Activated CD4-positive, alpha-beta memory T cell treated with anti-CD3 and anti-CD28 coated beads, Interleukin-2, amount 10 ng/mL, durations not matched to agents 7 days and 5 days (primary cell): ENCODE measurements at regions of chr1 and their contacts with region 1.

Region 1: GRCh38 chr1:29181413-29182225 is at the start of gene SRSF4:
- DNase-seq: peak; percentile 99
- H3K4me3 Mint-ChIP-seq: peak within 1 kb of the TSS; percentile 98
- H3K27ac Mint-ChIP-seq: peak within 1 kb of the TSS; percentile 95
- H3K4me1 Mint-ChIP-seq: peaks cover 50% of the 10 kb centered on the region
- H3K27me3 Mint-ChIP-seq: no peaks in the 10 kb centered on the region
- total RNA-seq, gene SRSF4: 121 to 123 TPM

Region 2: DNA sequence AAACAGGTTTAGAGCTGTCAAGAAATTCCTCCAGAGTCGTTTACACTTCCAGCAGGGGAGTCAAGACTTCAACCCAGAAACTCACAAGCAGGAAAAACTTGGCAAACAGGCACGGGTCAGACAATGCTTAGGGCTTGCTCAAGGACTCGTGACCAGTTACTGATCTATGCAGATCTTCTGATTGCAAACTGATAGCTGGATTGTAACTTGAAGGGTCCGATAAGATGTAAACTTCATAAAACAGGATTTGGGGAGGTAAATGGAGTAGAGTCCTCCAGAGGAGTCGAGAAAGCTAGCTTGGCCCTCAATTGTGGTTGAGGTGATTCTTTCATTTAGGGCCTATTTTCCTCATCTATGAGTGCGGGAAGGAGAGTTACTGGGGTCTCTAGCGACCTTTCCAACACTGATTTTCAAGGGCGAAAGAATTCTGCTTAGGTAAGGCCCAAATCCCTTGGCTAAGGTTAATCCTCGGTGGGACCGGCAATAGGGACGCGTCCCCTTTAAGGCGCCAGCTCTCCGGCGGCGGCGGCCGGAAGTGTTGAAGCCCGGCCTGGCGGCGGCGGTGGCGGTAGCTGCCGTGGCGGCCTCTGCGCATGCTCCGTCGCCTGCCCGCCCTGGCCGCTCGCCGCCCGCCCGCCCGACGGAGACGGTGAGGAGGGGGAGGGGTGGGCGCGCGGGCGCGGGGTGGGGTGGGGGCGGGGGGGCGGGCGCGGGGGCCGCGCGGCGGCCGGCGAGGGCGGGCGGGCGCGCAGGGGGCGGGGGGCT is 513.2 kb before region 1 on chr1 and contains the start of gene GMEB1:
- CTCF ChIA-PET with region 1: interaction called, 3 read pairs
- POLR2A ChIA-PET with region 1: interaction called, 36 read pairs
- DNase-seq: peak; percentile 89
- H3K4me3 Mint-ChIP-seq: peak within 1 kb of the TSS; percentile 92
- H3K27ac Mint-ChIP-seq: peak within 1 kb of the TSS; percentile 97
- H3K4me1 Mint-ChIP-seq: peaks cover 20% of the 10 kb centered on the region
- H3K27me3 Mint-ChIP-seq: no peaks in the 10 kb centered on the region
- total RNA-seq, gene GMEB1: 27.7 to 28.7 TPM

Region 3: DNA sequence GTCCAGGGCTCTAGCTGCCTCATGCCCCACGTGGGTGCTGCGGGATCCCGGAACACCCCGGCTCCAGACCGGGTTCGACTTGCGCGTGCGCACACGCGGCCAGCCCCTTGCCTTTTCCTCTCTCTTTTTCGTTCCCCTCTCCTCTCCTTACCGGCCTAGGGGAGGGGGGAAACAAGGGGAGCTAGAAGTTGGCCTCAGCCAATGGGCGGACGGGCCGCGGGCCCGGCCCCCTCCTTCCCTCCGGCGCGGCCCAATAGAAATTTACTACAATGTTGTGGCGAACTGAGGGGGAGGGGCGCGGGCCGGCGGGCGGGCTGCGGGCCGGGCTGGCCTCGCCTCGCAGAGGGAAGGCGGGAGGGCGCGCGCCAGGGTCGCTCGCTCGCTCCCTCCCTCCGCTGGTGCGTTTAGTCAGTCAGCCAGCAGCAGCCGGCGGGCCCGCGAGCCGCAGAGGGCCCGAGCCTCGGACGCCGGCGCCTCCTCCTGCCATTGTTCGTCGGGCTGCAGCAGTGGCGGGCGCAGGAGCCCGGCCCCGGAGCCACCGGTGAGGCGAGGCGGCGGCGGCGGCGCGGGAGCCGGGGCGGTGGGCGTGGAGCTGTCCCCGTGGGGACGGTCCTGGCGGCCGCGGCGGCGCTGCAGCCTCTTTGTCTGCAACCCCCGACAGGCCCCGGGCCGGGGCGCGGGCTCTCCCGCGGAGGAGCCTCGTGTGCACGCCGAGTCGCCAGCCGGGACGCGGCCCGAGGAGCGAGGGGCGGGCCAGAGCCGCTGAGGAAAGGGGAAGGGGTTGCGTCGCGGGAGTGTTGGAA is 267.2 kb before region 1 on chr1 and contains the start of gene EPB41:
- CTCF ChIA-PET with region 1: interaction called, 7 read pairs
- POLR2A ChIA-PET with region 1: interaction called, 21 read pairs
- DNase-seq: peak; percentile 90
- H3K4me3 Mint-ChIP-seq: peak within 1 kb of the TSS; percentile 89
- H3K27ac Mint-ChIP-seq: peak within 1 kb of the TSS; percentile 88
- H3K4me1 Mint-ChIP-seq: peaks cover 41% of the 10 kb centered on the region
- H3K27me3 Mint-ChIP-seq: no peaks in the 10 kb centered on the region
- total RNA-seq, gene EPB41: 95.0 to 97.6 TPM

Region 4: GRCh38 chr1:29162025-29162424 is 19.6 kb before region 1 on chr1:
- CTCF ChIA-PET with region 1: interaction called, 4 read pairs
- POLR2A ChIA-PET with region 1: interaction called, 108 read pairs
- DNase-seq: no peak
- H3K4me3 Mint-ChIP-seq: no peak overlapping the region
- H3K27ac Mint-ChIP-seq: no peak overlapping the region
- H3K4me1 Mint-ChIP-seq: peaks cover 43% of the 10 kb centered on the region
- H3K27me3 Mint-ChIP-seq: no peaks in the 10 kb centered on the region

Region 5: DNA sequence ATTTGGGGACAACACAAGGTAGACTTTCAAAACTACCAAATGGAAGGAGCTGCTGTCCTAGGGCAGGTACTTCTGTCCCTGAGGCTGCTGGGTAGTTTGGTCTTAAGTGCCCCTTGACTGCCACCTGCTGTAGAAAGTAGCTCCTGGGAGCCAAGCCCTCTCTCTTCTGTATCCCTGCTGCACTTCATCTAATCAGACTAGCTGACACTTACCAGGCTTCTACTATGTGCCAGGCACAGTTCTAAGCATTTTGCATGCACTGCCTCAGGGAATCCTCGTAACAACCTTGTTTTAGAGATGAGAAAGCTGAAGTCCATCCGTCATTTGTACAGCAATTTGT is 15.9 kb after region 1 on chr1:
- CTCF ChIA-PET with region 1: interaction called, 72 read pairs
- POLR2A ChIA-PET with region 1: interaction called, 44 read pairs
- DNase-seq: peak; percentile 60
- H3K4me3 Mint-ChIP-seq: no peak overlapping the region
- H3K27ac Mint-ChIP-seq: no peak overlapping the region
- H3K4me1 Mint-ChIP-seq: peaks cover 3% of the 10 kb centered on the region
- H3K27me3 Mint-ChIP-seq: no peaks in the 10 kb centered on the region

Region 6: GRCh38 chr1:29259802-29260441 is 78.3 kb after region 1 on chr1:
- CTCF ChIA-PET with region 1: no interaction called
- POLR2A ChIA-PET with region 1: no interaction called
- DNase-seq: peak; percentile 31
- H3K4me3 Mint-ChIP-seq: peak overlapping the region; percentile 58
- H3K27ac Mint-ChIP-seq: no peak overlapping the region
- H3K4me1 Mint-ChIP-seq: peaks cover 3% of the 10 kb centered on the region
- H3K27me3 Mint-ChIP-seq: peaks cover 45% of the 10 kb centered on the region

Region 7: DNA sequence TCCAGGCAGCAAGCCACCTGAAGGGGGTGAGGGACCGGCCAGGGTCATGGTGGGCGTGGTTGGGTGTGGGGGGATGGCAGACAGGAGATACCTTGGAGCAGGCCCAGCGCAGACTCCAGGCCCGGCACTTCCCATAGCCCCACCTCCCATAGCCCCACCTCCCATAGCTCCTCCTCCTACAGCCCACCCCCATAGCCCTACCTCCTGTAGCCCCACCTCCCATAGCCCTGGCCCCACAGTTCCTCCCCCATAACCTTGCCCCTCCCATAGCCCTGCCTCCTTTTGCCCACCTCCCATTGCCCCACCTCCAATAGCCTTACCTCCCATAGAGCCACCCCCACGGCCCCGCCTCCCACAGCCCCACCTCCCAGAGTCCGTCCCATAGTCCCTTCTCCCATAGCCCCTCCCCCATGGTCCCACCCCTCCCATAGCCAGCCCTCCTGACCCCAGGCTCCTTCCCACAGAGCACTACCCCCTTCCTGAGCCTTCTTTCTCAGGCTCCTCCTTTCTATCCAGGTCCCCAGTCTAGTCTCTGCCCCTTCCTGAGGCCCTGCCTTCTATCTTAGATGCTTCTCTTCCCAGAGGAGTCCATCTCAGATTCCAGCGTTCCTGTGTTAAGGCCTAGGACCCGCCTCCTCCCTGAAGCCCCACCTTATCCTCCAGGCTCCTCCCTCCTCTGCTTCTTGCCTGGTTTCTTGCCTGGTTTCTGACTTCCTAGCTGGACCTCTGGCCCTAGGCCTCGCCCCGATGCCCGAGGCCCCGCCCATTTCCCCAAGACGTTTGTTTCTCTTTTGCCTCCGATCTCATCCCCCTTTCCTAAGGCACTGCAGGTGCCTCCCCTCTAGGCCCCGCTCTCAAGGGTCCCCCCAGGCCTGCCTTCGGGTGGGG is 101.5 kb after region 1 on chr1:
- CTCF ChIA-PET with region 1: no interaction called
- POLR2A ChIA-PET with region 1: no interaction called
- DNase-seq: peak; percentile 21
- H3K4me3 Mint-ChIP-seq: no peak overlapping the region
- H3K27ac Mint-ChIP-seq: no peak overlapping the region
- H3K4me1 Mint-ChIP-seq: peaks cover 4% of the 10 kb centered on the region
- H3K27me3 Mint-ChIP-seq: no peaks in the 10 kb centered on the region

Region 8: GRCh38 chr1:29368936-29369932 is 187.6 kb after region 1 on chr1:
- CTCF ChIA-PET with region 1: no interaction called
- POLR2A ChIA-PET with region 1: no interaction called
- DNase-seq: no peak
- H3K4me3 Mint-ChIP-seq: no peak overlapping the region
- H3K27ac Mint-ChIP-seq: no peak overlapping the region
- H3K4me1 Mint-ChIP-seq: no peaks in the 10 kb centered on the region
- H3K27me3 Mint-ChIP-seq: peaks cover 15% of the 10 kb centered on the region